ENCODE measurements at regions of chr16 and their contacts with region 1.

Region 1: DNA sequence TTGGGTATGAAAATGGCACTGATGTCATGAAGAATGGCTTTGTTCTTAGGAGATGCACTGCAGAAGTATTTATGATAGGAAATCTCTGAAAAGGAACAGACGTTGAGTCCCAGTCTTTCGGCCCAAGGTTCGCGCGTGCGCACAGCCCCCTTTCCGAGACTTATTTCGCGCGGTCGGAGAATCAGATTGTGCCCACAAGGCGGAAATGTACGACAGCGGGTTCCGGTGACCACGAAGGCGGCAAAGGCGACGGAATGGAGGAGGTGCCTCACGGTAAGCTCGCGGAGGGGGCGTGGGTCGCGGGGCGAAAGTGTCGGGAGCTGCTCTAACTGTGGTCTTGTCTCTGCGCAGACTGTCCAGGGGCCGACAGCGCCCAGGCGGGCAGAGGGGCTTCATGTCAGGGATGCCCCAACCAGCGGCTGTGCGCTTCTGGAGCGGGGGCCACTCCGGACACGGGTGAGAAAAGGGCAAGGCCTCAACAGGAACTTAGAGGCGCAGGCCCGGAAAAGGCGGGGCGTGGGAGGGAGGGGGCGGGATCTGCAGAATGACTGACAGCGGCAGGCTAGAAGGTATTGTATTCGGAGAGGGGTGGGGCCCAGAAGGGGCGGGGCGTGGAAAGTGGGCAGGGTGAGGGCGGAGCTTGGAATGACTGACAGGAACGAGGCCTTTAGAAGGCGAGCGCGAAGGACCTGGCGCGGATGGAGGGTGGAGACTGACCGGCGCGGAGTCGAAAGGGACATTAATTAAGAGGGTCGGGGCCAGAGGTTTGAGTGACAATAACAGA is at the start of gene NUBP1:
- DNase-seq: peak; percentile 99
- ATAC-seq: peak; percentile 97
- total RNA-seq, gene NUBP1: 50.4 TPM

Region 2: DNA sequence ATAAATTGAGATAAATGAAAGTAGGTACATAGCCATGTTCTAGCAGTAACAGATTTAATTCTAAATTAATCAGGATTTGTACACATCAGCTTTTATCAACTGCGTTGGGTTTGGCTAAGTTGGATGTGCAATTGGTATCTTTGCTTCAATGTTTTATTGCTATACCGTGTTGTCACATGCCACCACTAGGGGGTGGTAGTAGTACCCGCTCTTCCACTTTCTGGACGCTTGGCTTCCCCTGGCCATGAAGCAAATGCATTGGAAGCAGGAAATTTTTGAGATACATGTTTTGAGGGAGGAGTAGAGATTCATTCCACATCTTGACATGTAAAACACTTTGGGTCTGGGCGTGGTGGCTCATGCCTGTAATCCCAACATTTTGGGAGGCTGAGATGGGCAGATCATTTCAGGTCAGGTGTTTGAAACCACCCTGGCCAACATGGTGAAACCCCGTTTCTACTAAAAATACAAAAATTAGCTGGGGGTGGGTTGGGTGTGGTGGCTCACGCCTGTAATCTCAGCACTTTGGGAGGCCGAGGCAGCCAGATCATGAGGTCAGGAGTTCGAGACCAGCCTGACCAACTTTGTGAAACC is 222.0 kb before region 1 on chr16:
- intact Hi-C with region 1: no loop called
- DNase-seq: no peak
- ATAC-seq: peak; percentile 57

Region 3: GRCh38 chr16:10754941-10755340 is 11.1 kb after region 1 on chr16:
- intact Hi-C with region 1: no loop called
- DNase-seq: no peak
- ATAC-seq: no peak

Region 4: DNA sequence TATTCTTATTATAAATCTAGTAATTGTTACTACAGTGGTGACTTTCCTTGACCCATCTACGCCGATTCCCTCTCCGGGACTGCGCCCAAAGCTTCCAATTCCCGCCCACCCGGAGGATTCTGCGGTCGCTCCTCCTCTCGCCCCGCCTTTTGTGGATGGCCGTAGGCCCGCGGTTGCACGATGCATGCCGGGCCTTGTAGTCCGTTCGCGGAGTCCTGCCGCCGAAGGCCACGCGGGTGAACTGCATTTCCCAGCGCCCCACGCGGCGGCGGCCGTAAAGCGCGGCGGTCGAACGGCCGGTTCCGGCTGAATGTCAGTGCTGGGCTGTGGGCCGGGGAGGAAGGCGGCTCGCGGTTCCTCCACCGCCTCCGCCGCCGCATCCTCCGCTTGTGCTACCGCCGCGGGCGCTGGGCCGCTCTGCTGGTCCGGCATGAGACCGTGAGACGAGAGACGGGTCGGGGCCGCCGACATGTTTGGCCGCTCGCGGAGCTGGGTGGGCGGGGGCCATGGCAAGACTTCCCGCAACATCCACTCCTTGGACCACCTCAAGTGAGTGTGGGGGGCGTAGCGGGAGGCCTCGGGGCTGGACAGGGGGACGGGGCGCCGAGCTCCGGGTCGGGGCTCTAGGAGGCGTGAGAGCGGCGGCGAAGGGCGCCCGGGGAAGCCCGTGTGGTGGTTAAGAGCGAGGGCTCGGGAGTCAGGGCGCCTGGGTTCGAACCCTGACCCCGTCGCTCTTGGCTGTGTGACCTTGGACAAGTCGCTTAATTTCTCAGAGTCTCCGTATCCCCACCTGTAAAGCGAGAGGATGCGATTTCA is 200.7 kb after region 1 on chr16 and contains the start of gene CLEC16A:
- intact Hi-C with region 1: loop called (anchors 5 kb)
- DNase-seq: peak; percentile 100
- ATAC-seq: peak; percentile 89
- total RNA-seq, gene CLEC16A: 23.0 TPM

Measured in Right ventricle myocardium inferior (tissue), 1 donor.